ENCODE measurements at regions of chr15 and their contacts with region 1.

Region 1: GRCh38 chr15:29990035-29990434 is 92.7 kb upstream of the GOLGA8J start:
- DNase-seq: no peak
- ATAC-seq: no peak
- H3K4me3 ChIP-seq: no peak overlapping the region
- H3K4me3 Mint-ChIP-seq: no peak overlapping the region
- H3K27ac ChIP-seq: no peak overlapping the region
- H3K27ac Mint-ChIP-seq: no peak overlapping the region
- H3K4me1 ChIP-seq: no peaks in the 10 kb centered on the region
- H3K4me1 Mint-ChIP-seq: no peaks in the 10 kb centered on the region
- H3K27me3 ChIP-seq: peaks cover 1 to 2% of the 10 kb centered on the region in 2 experiments
- H3K27me3 Mint-ChIP-seq: peaks cover 8 to 22% of the 10 kb centered on the region in 2 donors

Region 2: DNA sequence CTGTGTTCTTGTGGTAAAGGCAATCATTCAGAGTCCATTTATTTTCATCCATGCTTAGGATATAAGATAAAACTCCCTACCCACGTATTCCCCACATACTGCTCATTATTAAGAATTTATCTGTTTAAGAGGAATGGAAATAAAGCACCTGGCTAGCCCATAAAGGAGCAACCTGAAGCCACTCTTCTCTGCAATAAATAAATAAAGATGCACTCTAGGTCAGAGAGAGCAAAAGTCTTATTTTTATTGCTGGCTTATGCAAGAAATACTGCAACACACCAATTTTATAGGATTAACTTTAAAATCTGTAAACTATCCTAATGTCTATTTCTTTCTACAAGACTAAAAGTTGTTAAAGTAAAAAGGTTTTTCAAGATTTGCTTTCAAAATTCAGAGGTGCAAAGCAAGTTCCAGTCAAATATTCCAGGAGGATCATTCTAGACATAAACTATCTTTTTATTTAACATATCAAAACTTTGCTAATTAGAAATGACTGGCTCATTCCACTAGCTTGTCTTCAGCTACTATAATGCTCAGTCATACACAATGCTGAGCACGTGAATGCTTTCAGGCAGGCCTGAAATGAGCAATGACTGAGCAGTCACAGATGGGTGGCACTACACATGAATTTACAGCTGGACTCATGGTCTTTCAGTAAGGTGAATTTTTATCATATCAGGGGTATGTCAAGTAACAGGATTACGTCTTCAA is 174.9 kb before region 1 on chr15:
- CTCF ChIA-PET with region 1: no interaction called
- POLR2A ChIA-PET with region 1: no interaction called
- DNase-seq: no peak
- ATAC-seq: no peak
- H3K4me3 ChIP-seq: no peak overlapping the region
- H3K4me3 Mint-ChIP-seq: no peak overlapping the region
- H3K27ac ChIP-seq: no peak overlapping the region
- H3K27ac Mint-ChIP-seq: no peak overlapping the region
- H3K4me1 ChIP-seq: no peaks in the 10 kb centered on the region
- H3K4me1 Mint-ChIP-seq: no peaks in the 10 kb centered on the region
- H3K27me3 ChIP-seq: peaks cover 13 to 29% of the 10 kb centered on the region in 2 experiments
- H3K27me3 Mint-ChIP-seq: peaks cover 77 to 78% of the 10 kb centered on the region in 2 donors

Region 3: DNA sequence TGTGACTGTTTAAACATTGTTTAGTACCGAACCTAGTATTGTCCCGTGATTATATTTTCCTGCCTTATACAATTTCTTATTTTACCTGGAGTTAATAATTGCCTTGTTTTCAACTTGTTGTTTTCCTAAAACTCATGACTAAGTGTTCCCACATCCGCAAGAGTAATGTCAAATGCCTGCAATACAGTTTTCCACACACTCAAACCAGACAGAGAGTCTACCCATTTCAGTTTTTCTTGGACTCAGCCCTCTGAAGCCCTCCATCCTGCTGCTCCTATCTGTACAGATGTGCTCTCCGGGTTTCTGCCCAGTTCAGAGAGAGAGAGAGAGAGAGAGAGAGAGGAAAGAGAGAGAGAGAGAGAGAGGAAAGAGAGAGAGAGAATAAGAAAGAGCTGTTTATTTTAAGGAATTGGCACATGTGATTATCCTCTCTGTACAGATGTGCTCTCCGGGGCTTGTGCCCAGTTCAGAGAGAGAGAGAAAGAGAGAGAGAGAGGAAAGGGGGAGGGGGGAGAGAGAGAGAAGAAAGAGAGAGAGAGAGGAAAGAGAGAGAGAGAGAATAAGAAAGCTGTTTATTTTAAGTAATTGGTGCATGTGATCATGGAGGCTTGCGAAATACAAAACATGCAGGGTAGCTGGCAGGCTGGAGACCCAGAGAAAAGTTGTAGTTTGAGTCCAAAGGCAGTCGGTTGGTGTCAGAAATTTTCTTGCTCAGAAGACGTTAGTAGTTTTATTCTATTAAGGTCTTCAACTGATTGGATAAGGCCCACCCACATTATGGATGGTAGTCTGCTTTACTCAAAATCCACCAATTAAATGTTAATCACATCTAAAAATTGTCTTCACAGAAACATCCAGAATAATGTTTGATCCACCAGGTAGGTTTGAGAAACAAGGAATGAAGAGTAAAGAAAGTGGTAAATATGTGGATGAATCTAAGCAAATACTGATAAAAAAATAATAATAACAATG is 11.3 kb before region 1 on chr15:
- CTCF ChIA-PET with region 1: no interaction called
- POLR2A ChIA-PET with region 1: no interaction called
- DNase-seq: no peak
- ATAC-seq: no peak
- H3K4me3 ChIP-seq: no peak overlapping the region
- H3K4me3 Mint-ChIP-seq: no peak overlapping the region
- H3K27ac ChIP-seq: no peak overlapping the region
- H3K27ac Mint-ChIP-seq: no peak overlapping the region
- H3K4me1 ChIP-seq: no peaks in the 10 kb centered on the region
- H3K4me1 Mint-ChIP-seq: no peaks in the 10 kb centered on the region
- H3K27me3 ChIP-seq: peaks cover 0 to 5% of the 10 kb centered on the region in 2 experiments
- H3K27me3 Mint-ChIP-seq: peaks cover 14 to 23% of the 10 kb centered on the region in 2 donors

Region 4: GRCh38 chr15:30008156-30008555 is 18.1 kb after region 1 on chr15:
- CTCF ChIA-PET with region 1: no interaction called
- POLR2A ChIA-PET with region 1: interaction called in 1 of 2 experiments, 11 read pairs
- DNase-seq: no peak
- ATAC-seq: no peak
- H3K4me3 ChIP-seq: no peak overlapping the region
- H3K4me3 Mint-ChIP-seq: no peak overlapping the region
- H3K27ac ChIP-seq: no peak overlapping the region
- H3K27ac Mint-ChIP-seq: no peak overlapping the region
- H3K4me1 ChIP-seq: no peaks in the 10 kb centered on the region
- H3K4me1 Mint-ChIP-seq: no peaks in the 10 kb centered on the region
- H3K27me3 ChIP-seq: peaks cover 0 to 4% of the 10 kb centered on the region in 2 experiments
- H3K27me3 Mint-ChIP-seq: peaks cover 0 to 9% of the 10 kb centered on the region in 2 donors